GM18951 (cell line): ENCODE measurements at regions of chr3 and their contacts with region 1.

Region 1: DNA sequence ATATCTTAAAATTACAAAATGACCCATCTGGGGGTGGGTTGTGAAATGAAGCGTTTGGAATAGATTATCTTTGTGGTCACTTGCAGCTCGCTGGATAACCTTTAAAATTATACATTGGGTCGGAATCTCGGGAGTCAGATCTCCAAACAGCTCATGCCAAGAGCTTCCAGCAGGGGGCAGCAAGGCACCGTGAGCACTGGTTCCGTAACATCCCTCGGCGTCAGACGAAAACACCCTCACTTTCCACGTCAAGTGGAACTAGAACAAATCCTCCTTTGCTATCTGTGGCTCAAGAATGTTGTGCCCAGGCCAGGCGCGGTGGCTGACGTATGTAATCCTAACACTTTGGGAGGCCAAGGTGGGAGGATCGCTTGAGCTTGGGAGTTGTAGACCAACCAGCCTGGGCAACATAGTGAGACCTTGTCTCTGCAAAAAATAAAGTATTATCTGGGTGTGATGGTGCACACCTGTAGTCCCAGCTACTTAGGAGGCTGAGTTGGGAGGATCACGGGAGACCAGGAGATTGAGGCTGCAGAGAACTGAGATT is 31.1 kb downstream of the UMPS start:
- POLR2A ChIP-seq: no peak

Region 2: DNA sequence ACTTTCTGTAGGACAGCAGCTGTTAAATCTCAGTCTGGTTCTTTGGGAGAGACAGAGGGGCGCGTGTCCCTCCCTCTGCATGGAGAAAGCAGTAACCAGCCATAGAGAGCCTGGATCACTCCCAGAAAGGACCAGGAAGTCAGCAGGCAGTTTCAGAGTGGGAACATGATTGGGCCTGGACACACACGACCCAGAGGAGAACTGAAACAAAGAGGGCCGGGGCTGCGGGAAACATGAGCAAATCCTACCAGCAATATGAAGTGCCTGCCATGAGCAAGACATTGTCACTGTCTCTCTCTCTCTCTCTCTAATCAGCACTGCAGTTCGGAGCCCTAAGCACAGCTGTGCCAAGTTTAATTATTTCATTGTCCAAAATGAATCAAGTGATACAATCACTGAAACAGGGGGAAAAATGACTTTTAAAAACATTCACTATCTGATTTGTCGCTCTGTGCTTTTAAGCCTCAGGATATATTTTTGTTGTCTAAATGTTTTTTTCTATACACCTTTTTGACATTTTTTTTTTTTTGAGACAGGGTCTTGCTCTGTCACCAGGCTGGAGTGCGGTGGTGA is 155.6 kb after region 1 on chr3:
- in situ Hi-C with region 1: loop called (anchors 5 kb)
- POLR2A ChIP-seq: no peak

Region 3: GRCh38 chr3:125403789-125404188 is 642.5 kb after region 1 on chr3:
- in situ Hi-C with region 1: loop called (anchors 25 kb)
- POLR2A ChIP-seq: no peak

Region 4: DNA sequence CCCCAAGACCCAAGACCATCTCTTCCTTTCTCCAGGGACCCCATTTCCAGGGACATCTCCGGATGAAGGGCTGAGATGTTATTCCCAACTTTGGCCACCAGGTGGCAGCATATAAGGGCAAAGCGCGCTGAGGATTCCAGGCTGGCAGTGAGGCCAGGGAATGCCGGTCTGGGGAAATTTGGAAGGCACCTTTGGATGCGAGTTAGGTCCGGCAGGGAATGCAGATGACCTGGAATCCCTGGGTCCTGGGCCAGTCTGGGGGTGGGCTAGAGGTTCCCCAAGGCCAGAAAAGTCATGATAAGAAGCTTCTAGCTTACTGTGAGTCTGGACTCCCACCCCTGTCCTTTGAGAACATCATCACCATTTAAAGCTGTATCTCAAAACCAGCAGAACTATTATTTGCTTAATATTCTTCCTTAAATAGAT is 1761.1 kb after region 1 on chr3:
- in situ Hi-C with region 1: no loop called
- POLR2A ChIP-seq: no peak